ENCODE measurements at regions of chr6 and their contacts with region 1.

Region 1: GRCh38 chr6:30571075-30571768 is at the start of gene ABCF1:
- DNase-seq: peak; percentile 100
- ATAC-seq: peak; percentile 95
- H3K4me3 Mint-ChIP-seq: peak within 1 kb of the TSS; percentile 99
- H3K27ac Mint-ChIP-seq: peak within 1 kb of the TSS; percentile 96
- H3K4me1 Mint-ChIP-seq: peaks cover 53% of the 10 kb centered on the region
- H3K27me3 Mint-ChIP-seq: no peaks in the 10 kb centered on the region
- CTCF ChIP-seq: no peak
- total RNA-seq, gene ABCF1: 93.7 and 94.5 TPM in 2 replicates

Region 2: DNA sequence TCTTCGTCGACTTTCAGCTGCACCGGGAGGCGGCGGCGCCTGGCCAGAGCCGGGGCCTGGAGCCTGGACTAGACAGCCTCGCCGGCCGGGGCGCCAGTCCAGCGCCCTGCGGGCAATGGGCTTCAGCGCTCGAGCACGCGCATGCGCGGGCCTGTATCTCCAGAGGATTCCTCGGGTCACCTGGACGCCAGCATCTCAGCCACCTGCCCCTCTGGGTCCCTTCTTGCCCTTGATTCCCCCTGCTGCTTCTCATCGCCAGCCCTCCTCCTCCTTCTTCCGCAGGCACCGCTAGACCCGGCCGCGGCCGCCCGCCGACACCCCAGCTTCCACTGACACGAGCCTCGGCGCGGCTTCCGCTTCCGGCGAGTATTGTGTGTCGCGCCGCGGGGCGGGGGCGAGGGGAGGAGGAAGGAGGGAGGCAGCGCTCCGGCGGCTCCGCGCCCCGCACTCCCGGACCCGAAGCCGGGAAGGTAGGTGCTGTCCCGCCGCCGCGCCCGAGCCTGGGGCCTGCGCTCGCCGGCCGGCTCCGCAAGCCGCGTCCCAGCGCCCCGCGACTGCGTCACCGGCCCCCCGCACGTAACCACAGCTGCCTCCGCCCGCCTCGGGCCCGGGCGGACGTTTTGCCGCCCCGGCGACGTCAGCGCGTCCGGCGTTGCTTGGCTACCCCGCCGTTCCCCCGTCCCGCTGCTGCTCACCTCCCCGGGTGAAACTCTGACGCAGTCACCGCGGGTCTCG is 244.5 kb before region 1 on chr6 and contains the start of gene TRIM39:
- CTCF ChIA-PET with region 1: no interaction called
- POLR2A ChIA-PET with region 1: interaction called, 11 read pairs
- intact Hi-C with region 1: no loop called
- DNase-seq: peak; percentile 90
- ATAC-seq: peak; percentile 68
- H3K4me3 Mint-ChIP-seq: peak within 1 kb of the TSS; percentile 96
- H3K27ac Mint-ChIP-seq: peak within 1 kb of the TSS; percentile 99
- H3K4me1 Mint-ChIP-seq: peaks cover 57% of the 10 kb centered on the region
- H3K27me3 Mint-ChIP-seq: no peaks in the 10 kb centered on the region
- CTCF ChIP-seq: no peak
- total RNA-seq, gene TRIM39: 21.6 and 22.0 TPM in 2 replicates

Region 3: GRCh38 chr6:30344868-30345671 is 226.2 kb before region 1 on chr6 and contains the start of gene RPP21:
- CTCF ChIA-PET with region 1: no interaction called
- POLR2A ChIA-PET with region 1: no interaction called
- intact Hi-C with region 1: no loop called
- DNase-seq: peak; percentile 90
- ATAC-seq: peak; percentile 99
- H3K4me3 Mint-ChIP-seq: peak within 1 kb of the TSS; percentile 92
- H3K27ac Mint-ChIP-seq: peak within 1 kb of the TSS; percentile 94
- H3K4me1 Mint-ChIP-seq: peaks cover 32% of the 10 kb centered on the region
- H3K27me3 Mint-ChIP-seq: no peaks in the 10 kb centered on the region
- CTCF ChIP-seq: no peak
- total RNA-seq, gene RPP21: 38.1 and 46.8 TPM in 2 replicates

Region 4: GRCh38 chr6:30489081-30490025 is 81.9 kb before region 1 on chr6 and contains the start of gene HLA-E:
- CTCF ChIA-PET with region 1: interaction called, 17 read pairs
- POLR2A ChIA-PET with region 1: interaction called, 14 read pairs
- intact Hi-C with region 1: no loop called
- DNase-seq: peak; percentile 70
- ATAC-seq: peak; percentile 83
- H3K4me3 Mint-ChIP-seq: peak within 1 kb of the TSS; percentile 98
- H3K27ac Mint-ChIP-seq: peak within 1 kb of the TSS; percentile 97
- H3K4me1 Mint-ChIP-seq: peaks cover 58% of the 10 kb centered on the region
- H3K27me3 Mint-ChIP-seq: no peaks in the 10 kb centered on the region
- CTCF ChIP-seq: no peak
- total RNA-seq, gene HLA-E: 737 and 740 TPM in 2 replicates

Region 5: GRCh38 chr6:30515932-30516753 is 55.1 kb before region 1 on chr6:
- CTCF ChIA-PET with region 1: no interaction called
- POLR2A ChIA-PET with region 1: interaction called, 11 read pairs
- intact Hi-C with region 1: no loop called
- DNase-seq: peak; percentile 69
- ATAC-seq: peak; percentile 82
- H3K4me3 Mint-ChIP-seq: peak overlapping the region; percentile 87
- H3K27ac Mint-ChIP-seq: peak overlapping the region; percentile 97
- H3K4me1 Mint-ChIP-seq: peaks cover 71% of the 10 kb centered on the region
- H3K27me3 Mint-ChIP-seq: no peaks in the 10 kb centered on the region
- CTCF ChIP-seq: no peak

Region 6: DNA sequence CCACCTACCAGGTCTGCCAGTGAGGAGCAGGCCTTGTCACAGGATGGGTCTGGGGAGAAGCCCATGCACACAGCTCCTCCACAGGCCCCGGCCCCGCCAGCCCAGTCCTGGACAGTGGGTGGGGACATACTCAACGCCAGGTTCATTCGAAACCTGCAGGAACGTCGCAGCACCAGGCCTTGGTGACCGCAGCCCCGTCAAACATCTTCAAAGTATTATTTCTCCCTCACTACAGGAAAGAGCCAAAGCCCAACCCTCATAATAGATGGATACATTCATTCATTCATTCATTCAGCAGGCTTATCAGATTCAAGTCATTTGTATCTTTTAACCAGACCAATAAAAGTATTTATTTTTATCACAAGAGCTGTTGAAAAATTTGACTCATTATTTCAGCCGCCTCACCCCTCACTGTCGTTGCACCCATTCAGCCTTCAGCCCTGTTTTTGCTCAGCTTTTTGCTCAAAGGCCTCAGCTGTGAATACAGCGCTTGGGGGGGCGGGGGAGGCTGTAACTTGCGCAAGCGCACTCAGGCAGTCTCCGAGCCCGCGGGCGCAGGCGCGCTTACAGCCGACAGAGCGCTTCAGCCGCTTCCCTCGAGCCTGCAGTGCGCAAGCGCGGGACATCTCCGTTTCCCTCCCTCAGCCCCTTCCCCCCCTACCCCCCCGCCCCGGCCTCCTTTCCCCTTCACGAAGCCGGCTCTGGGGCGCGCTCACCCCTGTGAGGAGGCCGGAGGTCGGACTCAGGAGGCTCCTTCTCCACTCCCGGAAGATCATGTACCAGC is 75.4 kb after region 1 on chr6 and contains the start of gene C6orf136:
- CTCF ChIA-PET with region 1: no interaction called
- POLR2A ChIA-PET with region 1: interaction called, 3 read pairs
- intact Hi-C with region 1: loop called (anchors 1 kb)
- DNase-seq: peak; percentile 82
- ATAC-seq: peak; percentile 78
- H3K4me3 Mint-ChIP-seq: peak within 1 kb of the TSS; percentile 91
- H3K27ac Mint-ChIP-seq: peak within 1 kb of the TSS; percentile 90
- H3K4me1 Mint-ChIP-seq: peaks cover 35% of the 10 kb centered on the region
- H3K27me3 Mint-ChIP-seq: no peaks in the 10 kb centered on the region
- CTCF ChIP-seq: no peak
- total RNA-seq, gene C6orf136: 21.6 and 35.6 TPM in 2 replicates

Region 7: DNA sequence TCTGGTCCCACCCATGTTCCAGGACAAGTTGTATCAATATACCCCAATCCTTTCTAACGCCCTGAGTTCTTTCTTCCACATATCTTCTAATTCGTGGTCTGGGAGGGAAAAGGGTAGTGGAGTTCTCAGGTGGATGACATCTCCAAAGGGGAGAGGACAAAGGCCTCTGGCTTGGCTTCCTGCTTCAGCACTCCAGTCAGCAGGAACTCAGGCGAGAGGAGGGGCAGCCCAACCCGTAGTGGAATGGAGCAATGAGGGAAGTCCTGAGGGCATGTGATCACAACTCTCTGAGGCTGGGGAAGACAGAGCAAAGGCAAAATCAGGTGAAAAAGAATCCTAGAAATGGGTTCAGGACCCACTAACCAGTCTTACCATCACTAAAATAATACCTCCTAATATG is 129.1 kb after region 1 on chr6:
- CTCF ChIA-PET with region 1: no interaction called
- POLR2A ChIA-PET with region 1: no interaction called
- intact Hi-C with region 1: no loop called
- DNase-seq: no peak
- ATAC-seq: no peak
- H3K4me3 Mint-ChIP-seq: no peak overlapping the region
- H3K27ac Mint-ChIP-seq: no peak overlapping the region
- H3K4me1 Mint-ChIP-seq: no peaks in the 10 kb centered on the region
- H3K27me3 Mint-ChIP-seq: no peaks in the 10 kb centered on the region
- CTCF ChIP-seq: no peak

Region 8: GRCh38 chr6:30935018-30935417 is 363.8 kb after region 1 on chr6:
- CTCF ChIA-PET with region 1: no interaction called
- POLR2A ChIA-PET with region 1: no interaction called
- intact Hi-C with region 1: no loop called
- DNase-seq: no peak
- ATAC-seq: no peak
- H3K4me3 Mint-ChIP-seq: no peak overlapping the region
- H3K27ac Mint-ChIP-seq: no peak overlapping the region
- H3K4me1 Mint-ChIP-seq: no peaks in the 10 kb centered on the region
- H3K27me3 Mint-ChIP-seq: peaks cover 11% of the 10 kb centered on the region
- CTCF ChIP-seq: no peak

Measured in activated B cell treated with CpG ODN at 0.5 μM for 24 hours (primary cell).